Activated CD4-positive, alpha-beta T cell treated with anti-CD3 and anti-CD28 coated beads, Interleukin-2, amount 10 ng/mL, durations not matched to agents 7 days and 5 days (primary cell): ENCODE measurements at regions of chr5 and their contacts with region 1.

Region 1: GRCh38 chr5:134738133-134738962 is at the start of gene CAMLG:
- DNase-seq: peak; percentile 98
- H3K4me3 Mint-ChIP-seq: peak within 1 kb of the TSS; percentile 88
- H3K27ac Mint-ChIP-seq: peak within 1 kb of the TSS; percentile 95
- H3K4me1 Mint-ChIP-seq: peaks cover 35% of the 10 kb centered on the region
- H3K27me3 Mint-ChIP-seq: no peaks in the 10 kb centered on the region
- total RNA-seq, gene CAMLG: 20.6 to 24.1 TPM

Region 2: DNA sequence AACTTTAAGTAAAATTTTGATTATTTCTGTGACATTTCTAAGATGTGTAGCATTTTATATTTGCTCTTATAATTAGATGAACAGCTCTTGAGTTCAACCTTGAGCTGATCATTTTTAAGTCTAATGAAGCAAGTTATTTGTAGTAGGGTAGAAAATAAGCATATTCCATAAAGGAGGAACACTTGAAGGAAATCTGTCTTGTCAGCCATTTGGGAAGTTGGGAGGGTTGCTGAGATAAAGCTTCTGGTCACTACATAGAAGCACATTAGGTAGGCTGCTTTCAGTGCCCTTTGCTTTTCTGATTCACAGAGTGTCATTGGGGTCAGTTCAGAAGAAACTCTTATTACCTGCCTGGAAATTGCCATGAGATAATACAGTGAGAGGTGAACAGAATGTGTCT is 45.6 kb before region 1 on chr5:
- CTCF ChIA-PET with region 1: no interaction called
- POLR2A ChIA-PET with region 1: no interaction called
- DNase-seq: no peak
- H3K4me3 Mint-ChIP-seq: no peak overlapping the region
- H3K27ac Mint-ChIP-seq: no peak overlapping the region
- H3K4me1 Mint-ChIP-seq: no peaks in the 10 kb centered on the region
- H3K27me3 Mint-ChIP-seq: no peaks in the 10 kb centered on the region

Region 3: DNA sequence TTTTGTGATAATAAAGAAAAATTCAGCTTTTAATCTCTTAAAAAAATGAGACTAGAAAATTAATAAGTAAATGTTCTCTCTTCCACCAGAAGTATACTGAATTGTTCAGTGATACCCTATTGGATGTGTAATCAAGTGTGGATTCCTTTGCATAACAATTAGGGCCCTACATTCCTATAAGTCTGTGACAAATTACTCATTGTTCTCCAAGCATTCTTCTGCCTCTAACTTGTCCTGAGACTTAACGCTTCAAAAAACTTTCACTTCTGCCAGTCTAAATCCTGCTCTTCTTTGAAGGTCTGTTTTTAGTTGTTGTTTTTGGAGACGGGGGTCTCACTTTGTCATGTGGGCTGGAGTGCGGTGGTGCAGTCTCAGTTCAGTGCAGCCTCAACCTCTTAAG is 11.1 kb after region 1 on chr5:
- CTCF ChIA-PET with region 1: interaction called, 16 read pairs
- POLR2A ChIA-PET with region 1: interaction called, 3 read pairs
- DNase-seq: no peak
- H3K4me3 Mint-ChIP-seq: no peak overlapping the region
- H3K27ac Mint-ChIP-seq: no peak overlapping the region
- H3K4me1 Mint-ChIP-seq: no peaks in the 10 kb centered on the region
- H3K27me3 Mint-ChIP-seq: no peaks in the 10 kb centered on the region

Region 4: GRCh38 chr5:134758504-134759341 is 20.4 kb after region 1 on chr5 and contains the start of gene DDX46:
- CTCF ChIA-PET with region 1: interaction called, 23 read pairs
- POLR2A ChIA-PET with region 1: interaction called, 6 read pairs
- DNase-seq: peak; percentile 95
- H3K4me3 Mint-ChIP-seq: peak within 1 kb of the TSS; percentile 98
- H3K27ac Mint-ChIP-seq: peak within 1 kb of the TSS; percentile 96
- H3K4me1 Mint-ChIP-seq: peaks cover 38% of the 10 kb centered on the region
- H3K27me3 Mint-ChIP-seq: no peaks in the 10 kb centered on the region
- total RNA-seq, gene DDX46: 70.0 to 73.6 TPM

Region 5: DNA sequence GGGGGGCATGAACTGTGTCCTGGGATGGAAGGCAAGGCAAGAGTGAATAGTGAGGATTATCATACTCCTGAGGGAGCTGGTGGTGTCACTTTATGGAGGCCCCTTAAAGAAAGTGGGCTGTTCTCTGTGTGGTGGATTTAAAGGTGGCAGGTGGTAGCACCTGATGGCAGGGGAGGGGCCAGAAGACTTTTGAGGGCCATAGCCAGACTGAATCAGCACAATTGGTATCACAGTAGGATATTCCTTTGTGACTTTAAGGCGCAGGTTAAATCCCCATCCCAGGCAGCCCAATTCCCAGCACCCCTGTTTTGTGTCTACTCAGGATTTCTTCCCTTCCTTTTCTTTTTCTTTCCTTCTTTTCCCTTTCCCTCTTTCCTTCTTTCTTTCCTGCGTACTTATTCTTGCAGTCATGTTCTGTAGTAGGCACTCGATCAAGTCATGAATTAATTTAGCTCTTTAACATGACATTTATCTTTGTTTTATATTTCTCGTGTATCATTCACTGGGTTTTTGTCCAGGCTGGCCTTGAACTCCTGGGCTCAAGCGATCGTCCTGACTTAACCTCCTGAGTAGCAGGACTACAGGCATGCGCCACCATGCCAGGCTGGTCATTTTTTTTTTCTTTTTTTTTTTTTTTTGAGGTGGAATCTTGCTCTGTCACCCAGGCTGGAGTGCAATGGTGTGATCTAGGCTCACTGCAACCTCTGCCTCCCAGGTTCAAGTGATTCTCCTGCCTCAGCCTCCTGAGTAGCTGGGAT is 155.6 kb after region 1 on chr5:
- CTCF ChIA-PET with region 1: no interaction called
- POLR2A ChIA-PET with region 1: no interaction called
- DNase-seq: no peak
- H3K4me3 Mint-ChIP-seq: no peak overlapping the region
- H3K27ac Mint-ChIP-seq: no peak overlapping the region
- H3K4me1 Mint-ChIP-seq: peaks cover 3% of the 10 kb centered on the region
- H3K27me3 Mint-ChIP-seq: no peaks in the 10 kb centered on the region